ENCODE measurements at regions of chr11 and their contacts with region 1.

Region 1: GRCh38 chr11:133215590-133216230 is 316.6 kb downstream of the OPCML start:
- H3K4me3 ChIP-seq: no peak overlapping the region
- H3K27ac ChIP-seq: no peak overlapping the region
- H3K4me1 ChIP-seq: no peaks in the 10 kb centered on the region
- CTCF ChIP-seq: no peak

Region 2: GRCh38 chr11:133164986-133165385 is 50.7 kb before region 1 on chr11:
- CTCF ChIA-PET with region 1: no interaction called
- POLR2A ChIA-PET with region 1: no interaction called
- H3K4me3 ChIP-seq: no peak overlapping the region
- H3K27ac ChIP-seq: no peak overlapping the region
- H3K4me1 ChIP-seq: no peaks in the 10 kb centered on the region
- CTCF ChIP-seq: no peak

Region 3: DNA sequence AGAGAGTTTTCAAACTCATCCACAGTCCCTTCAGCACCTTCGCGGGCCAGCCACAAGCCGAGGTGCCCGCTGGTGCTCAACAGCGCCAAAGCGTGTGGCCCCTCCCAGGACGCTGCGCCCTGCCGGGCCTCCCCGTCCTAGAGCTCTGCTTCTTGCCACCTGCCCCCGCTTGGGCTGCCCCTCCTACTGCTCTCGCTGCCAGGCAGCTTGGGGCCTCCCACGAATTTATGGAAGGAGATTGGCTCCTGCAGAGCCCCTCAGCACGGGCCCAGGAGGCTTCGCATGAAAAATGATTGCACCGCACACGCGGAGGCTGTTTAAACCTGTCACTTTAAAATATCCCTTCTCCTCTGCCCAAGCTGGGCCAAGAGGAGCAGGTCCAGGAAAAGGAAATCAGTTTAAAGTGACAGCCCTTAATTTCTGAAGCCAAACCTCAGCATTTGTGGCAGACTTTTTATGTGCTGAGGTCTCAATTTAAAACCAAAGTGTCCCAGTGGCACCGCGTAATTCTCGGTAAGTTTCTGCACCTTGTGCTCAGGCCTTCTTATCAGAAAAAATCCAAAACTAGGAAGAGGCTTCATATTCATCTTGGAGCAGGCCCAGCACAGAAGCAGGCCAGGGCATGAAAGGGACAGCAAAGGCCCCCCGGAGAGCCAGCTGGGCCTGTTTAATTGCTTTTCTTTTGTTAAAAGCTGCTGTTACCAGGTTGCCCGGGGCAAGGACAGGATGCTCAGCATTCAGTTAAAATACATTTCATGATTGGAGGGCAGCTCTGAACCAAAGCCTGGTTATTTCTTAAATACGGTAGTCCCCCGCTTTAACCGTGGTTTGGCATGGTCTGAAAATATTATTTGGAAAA is 13.0 kb after region 1 on chr11:
- CTCF ChIA-PET with region 1: no interaction called
- POLR2A ChIA-PET with region 1: no interaction called
- H3K4me3 ChIP-seq: no peak overlapping the region
- H3K27ac ChIP-seq: no peak overlapping the region
- H3K4me1 ChIP-seq: no peaks in the 10 kb centered on the region
- CTCF ChIP-seq: no peak

Region 4: DNA sequence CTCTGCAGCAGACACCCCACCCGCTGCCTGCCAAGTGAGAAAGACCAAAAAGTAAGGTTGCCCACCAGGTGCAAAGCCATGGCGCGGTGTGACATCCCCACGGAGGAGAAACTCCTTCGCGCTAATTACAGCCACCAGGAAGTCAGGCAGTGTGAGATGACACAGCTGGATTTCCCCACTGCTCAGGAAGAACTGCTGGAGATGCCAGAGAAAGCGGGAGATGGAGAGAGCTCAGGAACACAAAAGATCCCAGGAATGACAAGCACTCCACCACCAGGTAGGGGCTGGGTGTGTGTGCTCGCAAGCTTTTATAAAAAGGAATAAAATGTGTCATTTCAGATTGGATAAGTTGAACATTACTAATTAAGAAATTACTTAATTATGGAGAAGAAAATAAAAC is 23.9 kb after region 1 on chr11:
- CTCF ChIA-PET with region 1: interaction called, 10 read pairs
- POLR2A ChIA-PET with region 1: no interaction called
- H3K4me3 ChIP-seq: no peak overlapping the region
- H3K27ac ChIP-seq: no peak overlapping the region
- H3K4me1 ChIP-seq: no peaks in the 10 kb centered on the region
- CTCF ChIP-seq: no peak